ENCODE measurements at regions of chr10 and their contacts with region 1.

Region 1: DNA sequence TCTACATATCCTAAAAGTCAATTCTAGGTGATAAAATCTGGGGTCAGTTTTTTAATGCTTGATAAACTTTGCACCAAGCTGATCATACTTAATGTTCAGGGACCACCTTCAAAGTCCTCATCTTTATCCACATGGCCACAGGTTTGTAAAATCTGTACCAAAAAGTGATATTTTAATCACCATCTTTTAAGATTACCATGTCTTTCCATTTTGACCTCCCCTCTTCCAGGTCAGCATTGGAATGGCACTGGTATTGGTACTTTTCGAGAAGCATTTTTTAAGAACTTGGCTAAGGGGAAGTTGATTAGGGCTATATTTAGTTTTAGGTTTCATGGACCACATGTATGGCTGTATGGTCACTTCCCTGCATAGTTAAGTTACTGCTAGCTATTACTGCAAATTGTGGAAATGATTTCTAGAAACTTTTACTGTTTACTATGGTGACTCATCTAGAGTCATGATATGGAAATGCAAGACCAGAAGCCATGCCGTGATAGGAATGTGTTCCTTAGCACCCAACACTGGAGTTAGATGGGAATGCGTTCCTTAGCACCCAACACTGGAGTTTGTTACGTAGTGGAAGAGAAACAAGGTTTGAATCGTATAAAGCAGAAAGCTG is 50.8 kb upstream of the ABLIM1 start:
- DNase-seq: peak; percentile 82
- ATAC-seq: peak; percentile 89
- H3K4me3 ChIP-seq: no peak overlapping the region
- H3K27ac ChIP-seq: peak overlapping the region; percentile 100
- H3K4me1 ChIP-seq: peaks cover 95% of the 10 kb centered on the region
- H3K27me3 ChIP-seq: no peaks in the 10 kb centered on the region
- CTCF ChIP-seq: no peak

Region 2: GRCh38 chr10:114412907-114413386 is 295.9 kb before region 1 on chr10:
- CTCF ChIA-PET with region 1: no interaction called
- POLR2A ChIA-PET with region 1: no interaction called
- in situ Hi-C with region 1: no loop called
- intact Hi-C with region 1: no loop called
- DNase-seq: no peak
- ATAC-seq: peak; percentile 88
- H3K4me3 ChIP-seq: peak overlapping the region in 1 of 2 experiments; percentile 36; a peak in 3 of 4 replicates
- H3K27ac ChIP-seq: peak overlapping the region; percentile 99
- H3K4me1 ChIP-seq: peaks cover 57% of the 10 kb centered on the region
- H3K27me3 ChIP-seq: no peaks in the 10 kb centered on the region
- CTCF ChIP-seq: no peak

Region 3: GRCh38 chr10:114743521-114744231 is 34.9 kb after region 1 on chr10:
- CTCF ChIA-PET with region 1: no interaction called
- POLR2A ChIA-PET with region 1: no interaction called
- in situ Hi-C with region 1: no loop called
- intact Hi-C with region 1: no loop called
- DNase-seq: no peak
- ATAC-seq: 0 out of 2 replicates have a peak, but pooled peaks have one; percentile 27
- H3K4me3 ChIP-seq: no peak overlapping the region
- H3K27ac ChIP-seq: peak overlapping the region; percentile 75
- H3K4me1 ChIP-seq: peaks cover 35% of the 10 kb centered on the region
- H3K27me3 ChIP-seq: no peaks in the 10 kb centered on the region
- CTCF ChIP-seq: no peak

Region 4: DNA sequence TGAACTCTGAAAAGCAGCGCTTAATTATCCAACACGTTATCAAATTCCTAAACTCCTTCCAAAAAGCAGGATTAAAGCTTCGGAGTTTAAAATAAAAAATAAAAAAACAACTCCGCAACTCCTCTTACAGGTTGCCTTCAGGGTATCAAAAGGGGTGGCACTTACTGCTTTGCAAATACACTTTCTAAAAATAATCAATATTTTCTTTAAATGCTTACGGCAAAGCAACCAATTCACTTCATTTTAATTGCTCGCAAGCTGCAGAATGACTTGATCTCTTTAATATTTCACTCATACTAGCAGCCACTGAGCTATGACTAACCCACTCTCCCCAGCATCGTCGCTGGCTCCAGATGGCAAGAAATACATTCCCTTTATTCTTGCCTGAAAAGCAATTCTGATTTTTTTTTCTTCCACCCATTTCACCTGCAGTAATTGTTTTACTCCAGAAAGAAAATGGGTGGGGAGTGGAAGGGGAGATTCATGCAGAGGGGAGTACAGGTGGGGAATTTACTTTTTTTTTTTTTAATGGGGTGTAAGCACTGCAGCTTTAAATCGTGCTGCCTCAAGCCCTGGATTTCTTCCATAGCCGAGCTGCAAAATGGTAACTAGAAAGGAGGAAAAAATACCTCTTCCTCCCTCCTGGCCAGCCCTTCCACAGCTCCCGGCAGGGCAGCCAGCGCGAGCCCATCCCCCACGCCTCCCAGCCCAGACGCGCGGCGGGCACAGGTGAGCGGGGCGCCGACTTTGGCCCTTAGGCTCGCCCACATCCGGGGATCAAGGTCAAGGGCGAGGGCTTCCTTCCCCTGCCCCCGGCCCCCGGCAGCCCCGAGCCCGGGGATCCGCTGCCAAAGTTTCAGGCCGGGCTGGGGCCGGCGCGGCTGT is 58.5 kb after region 1 on chr10:
- CTCF ChIA-PET with region 1: no interaction called
- POLR2A ChIA-PET with region 1: no interaction called
- in situ Hi-C with region 1: no loop called
- intact Hi-C with region 1: loop called (anchors 5 kb)
- DNase-seq: no peak
- ATAC-seq: peak; percentile 81
- H3K4me3 ChIP-seq: peak overlapping the region; percentile 60 to 72
- H3K27ac ChIP-seq: peak overlapping the region; percentile 99
- H3K4me1 ChIP-seq: peaks cover 67% of the 10 kb centered on the region
- H3K27me3 ChIP-seq: no peaks in the 10 kb centered on the region
- CTCF ChIP-seq: no peak

Region 5: DNA sequence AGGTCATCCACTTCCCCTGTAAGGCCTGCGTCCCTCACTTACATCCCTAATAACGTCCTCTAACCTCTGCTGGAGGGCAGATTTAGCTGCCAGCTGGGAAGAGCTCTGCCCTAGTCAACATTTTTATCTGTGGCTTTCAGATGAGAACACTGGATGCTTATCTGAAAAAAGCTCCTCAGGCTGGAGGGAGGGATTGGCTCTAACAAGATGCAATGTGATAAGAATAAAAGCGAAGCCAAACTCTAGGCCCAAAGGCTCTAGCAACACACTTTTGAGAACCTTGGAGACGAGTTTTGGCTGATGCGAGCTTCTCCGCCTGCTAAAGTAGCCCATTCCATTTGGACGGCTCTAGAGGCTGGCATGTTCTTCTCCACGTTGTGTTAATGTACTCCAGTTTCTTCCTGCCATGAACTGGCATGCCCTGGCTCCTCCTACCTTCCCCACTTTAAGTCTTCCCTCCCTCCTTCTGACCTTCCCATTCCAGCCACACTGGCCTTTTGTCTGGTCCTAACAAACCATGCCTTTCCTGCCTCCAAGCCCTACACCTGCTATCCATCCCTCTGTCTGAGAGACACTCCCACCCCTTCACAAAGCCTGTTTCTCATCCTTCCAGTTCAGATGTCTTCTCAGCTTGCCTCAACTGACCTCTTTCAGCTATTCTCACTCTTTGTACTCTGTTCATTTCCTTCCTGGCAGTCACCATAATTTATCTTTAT is 321.8 kb after region 1 on chr10:
- CTCF ChIA-PET with region 1: no interaction called
- POLR2A ChIA-PET with region 1: no interaction called
- in situ Hi-C with region 1: no loop called
- intact Hi-C with region 1: no loop called
- DNase-seq: no peak
- ATAC-seq: 0 out of 2 replicates have a peak, but pooled peaks have one; percentile 31
- H3K4me3 ChIP-seq: no peak overlapping the region
- H3K27ac ChIP-seq: no peak overlapping the region
- H3K4me1 ChIP-seq: no peaks in the 10 kb centered on the region
- H3K27me3 ChIP-seq: no peaks in the 10 kb centered on the region
- CTCF ChIP-seq: no peak

Region 6: GRCh38 chr10:115141254-115141653 is 432.4 kb after region 1 on chr10:
- CTCF ChIA-PET with region 1: no interaction called
- POLR2A ChIA-PET with region 1: no interaction called
- in situ Hi-C with region 1: no loop called
- intact Hi-C with region 1: no loop called
- DNase-seq: no peak
- ATAC-seq: no peak
- H3K4me3 ChIP-seq: no peak overlapping the region
- H3K27ac ChIP-seq: no peak overlapping the region
- H3K4me1 ChIP-seq: no peaks in the 10 kb centered on the region
- H3K27me3 ChIP-seq: no peaks in the 10 kb centered on the region
- CTCF ChIP-seq: peak; percentile 60; the same call in 1 of the 2 replicates